Heart left ventricle (tissue), 16 donors: ENCODE measurements at regions of chrX and their contacts with region 1.

Region 1: GRCh38 chrX:71652405-71652804 is 14.9 kb upstream of the LOC101059915 start:
- DNase-seq: no peak
- ATAC-seq: peak in 3 of 4 donors; percentile 36 to 47 (median 42)
- H3K4me3 ChIP-seq: no peak overlapping the region
- H3K27ac ChIP-seq: no peak overlapping the region
- H3K4me1 ChIP-seq: no peaks in the 10 kb centered on the region
- H3K27me3 ChIP-seq: no peaks in the 10 kb centered on the region
- CTCF ChIP-seq: peak; percentile 38 to 66 (median 53)
- POLR2A ChIP-seq: no peak

Region 2: DNA sequence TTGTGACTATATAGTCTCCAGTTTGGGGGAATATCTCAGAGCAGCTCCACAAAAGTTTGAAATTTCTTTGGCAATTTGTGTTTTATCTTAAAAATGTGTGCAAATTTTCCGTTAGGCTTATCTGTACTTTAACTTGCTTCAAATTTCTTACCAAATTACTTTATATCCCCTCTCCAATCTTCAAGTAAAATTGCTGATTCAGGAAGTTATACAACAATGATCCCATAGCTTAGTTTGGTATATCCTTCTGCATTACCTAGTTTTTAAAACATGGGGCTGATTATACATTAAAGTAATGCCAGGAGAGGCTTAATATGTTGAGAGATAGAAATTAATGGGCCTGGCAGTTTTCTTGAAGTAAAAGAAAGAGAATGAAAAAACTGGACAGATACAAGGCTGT is 219.7 kb before region 1 on chrX:
- intact Hi-C with region 1: loop called in 2 of 10 experiments (anchors 5 kb)
- DNase-seq: no peak
- ATAC-seq: no peak
- H3K4me3 ChIP-seq: no peak overlapping the region
- H3K27ac ChIP-seq: no peak overlapping the region
- H3K4me1 ChIP-seq: no peaks in the 10 kb centered on the region
- H3K27me3 ChIP-seq: peaks cover 0 to 8% (median 0%) of the 10 kb centered on the region in 9 donors
- CTCF ChIP-seq: no peak
- POLR2A ChIP-seq: no peak

Region 3: DNA sequence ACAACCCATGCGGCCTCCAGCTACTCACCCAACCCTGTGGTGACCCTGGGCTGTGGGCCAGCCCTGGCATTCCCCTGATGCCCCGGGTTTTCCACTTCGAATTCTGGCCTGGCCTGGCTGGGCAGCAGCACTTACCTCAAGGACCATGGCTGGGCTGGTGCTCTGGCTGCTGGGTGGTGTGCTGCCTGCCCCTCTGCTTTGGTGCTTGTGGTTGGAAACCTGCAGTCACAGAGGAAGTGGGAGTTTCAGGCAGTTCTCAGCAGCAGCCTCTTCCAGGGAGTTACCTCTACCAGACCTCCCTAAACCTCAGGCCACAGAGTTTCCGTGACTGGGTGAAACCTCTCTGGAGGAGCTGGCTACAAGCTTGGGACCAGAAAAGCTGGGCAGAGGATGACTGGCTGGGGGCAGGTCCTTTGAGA is 34.1 kb before region 1 on chrX and contains the start of gene CXCR3:
- intact Hi-C with region 1: loop called in 1 of 10 experiments (anchors 5 kb)
- DNase-seq: peak in 4 of 5 donors; percentile 24 to 60 (median 32)
- ATAC-seq: peak; percentile 11 to 44 (median 24)
- H3K4me3 ChIP-seq: peak within 1 kb of the TSS in 2 of 12 donors; percentile 26 to 47
- H3K27ac ChIP-seq: peak within 1 kb of the TSS in 1 of 12 donors; percentile 55
- H3K4me1 ChIP-seq: peaks cover 0 to 17% (median 10%) of the 10 kb centered on the region in 12 donors
- H3K27me3 ChIP-seq: no peaks in the 10 kb centered on the region
- CTCF ChIP-seq: no peak
- POLR2A ChIP-seq: no peak
- total RNA-seq, gene CXCR3: 0.26 to 2.6 (median 0.33) TPM in 4 of 9 donors, not detected in the others

Region 4: GRCh38 chrX:72316408-72317110 is 664.2 kb after region 1 on chrX:
- intact Hi-C with region 1: no loop called
- DNase-seq: peak in 1 of 5 donors; percentile 10
- ATAC-seq: peak in 2 of 4 donors; percentile 16 to 26
- H3K4me3 ChIP-seq: no peak overlapping the region
- H3K27ac ChIP-seq: no peak overlapping the region
- H3K4me1 ChIP-seq: no peaks in the 10 kb centered on the region
- H3K27me3 ChIP-seq: peaks cover 0 to 41% (median 0%) of the 10 kb centered on the region in 9 donors
- CTCF ChIP-seq: no peak
- POLR2A ChIP-seq: no peak